ENCODE measurements at regions of chr2 and their contacts with region 1.

Region 1: DNA sequence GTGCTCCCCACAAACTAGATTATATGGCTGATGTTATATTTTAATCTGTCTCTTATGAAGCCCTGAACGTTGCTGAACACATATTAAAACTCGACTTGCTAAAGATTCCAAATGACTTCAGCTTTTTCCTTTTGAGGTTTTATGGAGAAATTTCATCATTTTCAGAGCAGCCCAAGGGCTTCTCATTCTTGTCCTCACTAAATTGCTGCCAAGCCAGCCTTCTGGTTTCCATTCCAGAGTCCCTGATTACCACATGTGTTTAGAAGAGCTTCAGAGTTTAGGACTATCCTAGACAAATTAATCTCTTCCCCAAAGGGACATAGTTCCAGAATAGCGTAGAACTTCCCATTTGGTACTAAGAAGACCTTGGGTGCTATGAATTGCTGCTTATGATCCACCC is 77.8 kb upstream of the CCDC195 start:
- DNase-seq: no peak
- ATAC-seq: no peak
- H3K4me3 ChIP-seq: no peak overlapping the region
- H3K4me3 Mint-ChIP-seq: no peak overlapping the region
- H3K27ac ChIP-seq: no peak overlapping the region
- H3K27ac Mint-ChIP-seq: no peak overlapping the region
- H3K4me1 ChIP-seq: no peaks in the 10 kb centered on the region
- H3K4me1 Mint-ChIP-seq: no peaks in the 10 kb centered on the region
- H3K27me3 ChIP-seq: no peaks in the 10 kb centered on the region
- H3K27me3 Mint-ChIP-seq: no peaks in the 10 kb centered on the region
- CTCF ChIP-seq: no peak

Region 2: GRCh38 chr2:224492531-224492930 is 301.4 kb before region 1 on chr2:
- CTCF ChIA-PET with region 1: no interaction called
- POLR2A ChIA-PET with region 1: no interaction called
- intact Hi-C with region 1: loop called in 1 of 2 experiments (anchors 10 kb)
- DNase-seq: no peak
- ATAC-seq: no peak
- H3K4me3 ChIP-seq: no peak overlapping the region
- H3K4me3 Mint-ChIP-seq: no peak overlapping the region
- H3K27ac ChIP-seq: no peak overlapping the region
- H3K27ac Mint-ChIP-seq: peak overlapping the region; percentile 15
- H3K4me1 ChIP-seq: no peaks in the 10 kb centered on the region
- H3K4me1 Mint-ChIP-seq: peaks cover 36% of the 10 kb centered on the region
- H3K27me3 ChIP-seq: no peaks in the 10 kb centered on the region
- H3K27me3 Mint-ChIP-seq: no peaks in the 10 kb centered on the region
- CTCF ChIP-seq: no peak

Region 3: DNA sequence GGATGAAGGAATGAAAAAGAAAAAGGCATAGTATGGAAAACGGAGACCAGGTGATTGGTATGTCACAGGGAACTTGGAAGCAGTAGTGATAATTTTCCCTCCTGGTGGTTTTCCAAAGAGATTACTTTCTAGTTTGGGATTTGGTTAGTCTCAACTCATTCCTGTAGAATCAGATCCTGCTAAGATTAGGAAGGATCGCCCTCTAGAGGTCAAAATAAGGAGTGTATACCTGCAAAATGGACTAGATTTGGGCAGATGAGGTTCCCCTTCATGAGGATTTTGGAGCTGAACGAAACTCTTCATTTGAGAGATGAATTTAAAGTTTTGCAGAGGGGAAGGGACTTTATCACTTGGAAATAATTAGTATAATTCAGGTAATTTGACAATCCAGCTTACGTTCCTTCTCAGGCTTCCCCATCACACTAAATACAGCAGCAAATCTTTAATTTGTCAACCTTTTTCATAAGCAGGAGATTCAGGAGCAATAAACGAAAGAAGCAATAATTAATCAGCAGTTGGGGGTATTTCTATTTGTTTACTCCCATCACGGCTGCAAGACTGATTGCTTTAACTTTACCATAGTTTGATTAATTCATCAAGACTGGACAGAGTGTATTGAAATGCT is 143.0 kb before region 1 on chr2:
- CTCF ChIA-PET with region 1: no interaction called
- POLR2A ChIA-PET with region 1: no interaction called
- intact Hi-C with region 1: no loop called
- DNase-seq: peak in 3 of 9 experiments; percentile 20 to 69 (median 60)
- ATAC-seq: peak; percentile 54
- H3K4me3 ChIP-seq: no peak overlapping the region
- H3K4me3 Mint-ChIP-seq: no peak overlapping the region
- H3K27ac ChIP-seq: no peak overlapping the region
- H3K27ac Mint-ChIP-seq: no peak overlapping the region
- H3K4me1 ChIP-seq: no peaks in the 10 kb centered on the region
- H3K4me1 Mint-ChIP-seq: peaks cover 2% of the 10 kb centered on the region
- H3K27me3 ChIP-seq: no peaks in the 10 kb centered on the region
- H3K27me3 Mint-ChIP-seq: no peaks in the 10 kb centered on the region
- CTCF ChIP-seq: peak; percentile 91

Region 4: GRCh38 chr2:224778474-224778877 is 15.5 kb before region 1 on chr2:
- CTCF ChIA-PET with region 1: interaction called, 11 read pairs
- POLR2A ChIA-PET with region 1: interaction called, 3 read pairs
- intact Hi-C with region 1: no loop called
- DNase-seq: peak; percentile 29 to 70 (median 55)
- ATAC-seq: peak; percentile 63
- H3K4me3 ChIP-seq: no peak overlapping the region
- H3K4me3 Mint-ChIP-seq: no peak overlapping the region
- H3K27ac ChIP-seq: no peak overlapping the region
- H3K27ac Mint-ChIP-seq: no peak overlapping the region
- H3K4me1 ChIP-seq: no peaks in the 10 kb centered on the region
- H3K4me1 Mint-ChIP-seq: peaks cover 5% of the 10 kb centered on the region
- H3K27me3 ChIP-seq: no peaks in the 10 kb centered on the region
- H3K27me3 Mint-ChIP-seq: no peaks in the 10 kb centered on the region
- CTCF ChIP-seq: peak; percentile 89

Region 5: GRCh38 chr2:224847961-224848850 is 54.3 kb after region 1 on chr2:
- CTCF ChIA-PET with region 1: interaction called, 4 read pairs
- POLR2A ChIA-PET with region 1: no interaction called
- intact Hi-C with region 1: loop called in 1 of 2 experiments (anchors 10 kb)
- DNase-seq: no peak
- ATAC-seq: no peak
- H3K4me3 ChIP-seq: no peak overlapping the region
- H3K4me3 Mint-ChIP-seq: no peak overlapping the region
- H3K27ac ChIP-seq: no peak overlapping the region
- H3K27ac Mint-ChIP-seq: peak overlapping the region; percentile 6
- H3K4me1 ChIP-seq: no peaks in the 10 kb centered on the region
- H3K4me1 Mint-ChIP-seq: peaks cover 1% of the 10 kb centered on the region
- H3K27me3 ChIP-seq: no peaks in the 10 kb centered on the region
- H3K27me3 Mint-ChIP-seq: no peaks in the 10 kb centered on the region
- CTCF ChIP-seq: no peak

Region 6: DNA sequence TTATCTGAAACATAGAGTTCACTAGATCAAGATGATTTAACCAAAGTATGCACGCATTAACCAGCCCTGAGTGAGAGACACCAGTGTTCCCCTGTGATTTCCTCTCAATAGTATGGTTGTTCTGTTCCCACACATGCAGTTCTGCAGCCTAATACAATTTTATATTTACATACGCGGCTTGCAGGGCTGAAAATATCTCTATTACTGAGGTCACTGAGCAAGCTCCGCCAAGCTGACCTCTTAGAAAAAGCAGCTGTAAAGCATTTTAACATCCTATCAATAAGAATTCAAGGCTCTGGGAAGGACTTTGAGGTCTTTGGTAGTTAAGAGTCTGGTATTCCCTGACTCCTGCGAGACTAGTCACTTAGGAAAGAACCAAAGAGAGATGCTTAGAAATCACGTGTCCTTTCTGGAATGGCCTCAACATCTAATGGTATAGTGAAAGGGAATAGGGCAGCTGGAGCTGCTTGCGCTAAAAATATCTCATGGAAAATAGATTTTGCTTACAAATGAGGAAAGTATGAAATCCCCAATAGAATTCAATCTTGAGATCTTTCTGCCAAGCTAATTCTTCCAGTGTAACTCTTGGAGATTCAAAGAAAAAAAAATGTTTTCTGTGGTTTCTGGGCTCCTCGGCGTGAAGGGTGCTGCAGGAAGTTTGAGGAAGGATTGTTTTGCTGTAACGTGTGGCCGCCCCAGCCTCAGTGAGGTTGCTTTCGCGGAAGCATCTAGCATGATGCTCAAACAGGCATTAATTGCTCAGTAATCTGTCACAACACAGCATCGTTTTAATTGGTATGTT is 189.2 kb after region 1 on chr2:
- CTCF ChIA-PET with region 1: no interaction called
- POLR2A ChIA-PET with region 1: no interaction called
- intact Hi-C with region 1: no loop called
- DNase-seq: peak in 8 of 9 experiments; percentile 34 to 77 (median 52)
- ATAC-seq: peak; percentile 45
- H3K4me3 ChIP-seq: no peak overlapping the region
- H3K4me3 Mint-ChIP-seq: peak overlapping the region; percentile 65
- H3K27ac ChIP-seq: peak overlapping the region; percentile 43 to 69
- H3K27ac Mint-ChIP-seq: peak overlapping the region; percentile 91
- H3K4me1 ChIP-seq: peaks cover 63% of the 10 kb centered on the region
- H3K4me1 Mint-ChIP-seq: peaks cover 81% of the 10 kb centered on the region
- H3K27me3 ChIP-seq: no peaks in the 10 kb centered on the region
- H3K27me3 Mint-ChIP-seq: no peaks in the 10 kb centered on the region
- CTCF ChIP-seq: no peak

Measured in CD8-positive, alpha-beta T cell (primary cell).